RWPE1 (cell line): ENCODE measurements at regions of chr9 and their contacts with region 1.

Region 1: GRCh38 chr9:125744616-125745015 is 2.6 kb upstream of the PBX3 start:
- DNase-seq: no peak
- H3K27ac ChIP-seq: no peak overlapping the region
- CTCF ChIP-seq: no peak

Region 2: DNA sequence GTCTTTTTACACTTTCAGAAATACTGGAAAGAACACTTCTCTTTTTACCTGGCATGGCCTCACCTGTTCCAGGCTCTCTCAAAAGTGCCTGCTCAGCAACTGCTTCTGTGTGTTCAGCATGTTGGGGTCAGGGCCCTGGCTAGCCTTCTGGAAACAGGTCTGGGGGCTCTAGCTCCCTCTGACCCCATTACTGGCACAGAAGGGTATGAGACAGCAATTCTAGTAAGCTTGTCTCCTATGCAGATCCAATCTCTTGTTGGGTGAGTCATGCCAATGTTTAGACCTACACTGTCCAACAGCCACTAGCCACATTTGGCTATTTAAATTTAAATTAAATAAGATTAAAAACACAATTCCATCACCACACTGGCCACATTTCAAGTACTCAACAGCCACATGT is 118.4 kb before region 1 on chr9:
- CTCF ChIA-PET with region 1: no interaction called
- POLR2A ChIA-PET with region 1: interaction called, 12 read pairs
- DNase-seq: no peak
- H3K27ac ChIP-seq: no peak overlapping the region
- CTCF ChIP-seq: no peak